A673 (cell line): ENCODE measurements at regions of chr22 and their contacts with region 1.

Region 1: GRCh38 chr22:37608477-37609239 is at the start of gene GGA1:
- DNase-seq: peak; percentile 99
- H3K4me3 ChIP-seq: peak within 1 kb of the TSS; percentile 97
- H3K27ac ChIP-seq: peak within 1 kb of the TSS; percentile 99
- H3K4me1 ChIP-seq: peaks cover 28% of the 10 kb centered on the region
- H3K27me3 ChIP-seq: no peaks in the 10 kb centered on the region
- CTCF ChIP-seq: no peak
- total RNA-seq, gene GGA1: 74.6 and 79.4 TPM in 2 replicates

Region 2: DNA sequence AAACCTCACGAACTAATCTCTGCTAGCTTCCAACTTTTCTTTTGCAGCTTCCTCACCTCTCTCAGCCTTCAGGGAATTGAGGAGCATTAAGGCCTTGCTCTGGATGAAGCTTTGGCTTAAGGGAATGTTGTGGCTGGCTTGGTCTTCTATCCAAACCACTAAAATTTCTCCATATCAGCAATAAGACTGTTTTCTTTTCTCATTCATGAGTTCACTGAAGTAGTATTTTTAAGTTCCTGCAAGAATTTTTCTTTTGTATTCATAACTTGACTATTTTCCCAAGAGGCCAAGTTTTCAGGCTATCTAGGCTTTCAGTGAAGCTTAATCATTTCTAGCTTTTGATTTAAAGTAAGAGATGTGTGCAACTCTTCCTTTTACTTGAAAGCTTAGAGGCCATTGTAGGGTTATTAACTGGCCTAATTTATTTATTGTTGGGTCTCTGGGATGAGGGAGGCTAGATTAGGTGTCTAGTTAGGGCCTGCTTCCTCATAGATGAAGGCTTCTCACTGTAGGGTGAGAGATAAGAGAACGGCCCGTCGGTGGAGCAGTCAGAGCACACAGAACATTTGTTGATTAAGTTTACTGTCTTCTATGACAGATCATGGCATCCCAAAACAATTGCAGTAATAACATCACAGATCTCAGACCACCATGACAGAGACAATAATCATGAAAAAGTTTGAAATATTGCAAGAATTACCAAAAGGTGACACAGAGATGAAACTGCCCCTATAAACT is 662.1 kb before region 1 on chr22:
- CTCF ChIA-PET with region 1: no interaction called
- POLR2A ChIA-PET with region 1: no interaction called
- intact Hi-C with region 1: no loop called
- DNase-seq: no peak
- H3K4me3 ChIP-seq: no peak overlapping the region
- H3K27ac ChIP-seq: no peak overlapping the region
- H3K4me1 ChIP-seq: no peaks in the 10 kb centered on the region
- H3K27me3 ChIP-seq: no peaks in the 10 kb centered on the region
- CTCF ChIP-seq: no peak

Region 3: DNA sequence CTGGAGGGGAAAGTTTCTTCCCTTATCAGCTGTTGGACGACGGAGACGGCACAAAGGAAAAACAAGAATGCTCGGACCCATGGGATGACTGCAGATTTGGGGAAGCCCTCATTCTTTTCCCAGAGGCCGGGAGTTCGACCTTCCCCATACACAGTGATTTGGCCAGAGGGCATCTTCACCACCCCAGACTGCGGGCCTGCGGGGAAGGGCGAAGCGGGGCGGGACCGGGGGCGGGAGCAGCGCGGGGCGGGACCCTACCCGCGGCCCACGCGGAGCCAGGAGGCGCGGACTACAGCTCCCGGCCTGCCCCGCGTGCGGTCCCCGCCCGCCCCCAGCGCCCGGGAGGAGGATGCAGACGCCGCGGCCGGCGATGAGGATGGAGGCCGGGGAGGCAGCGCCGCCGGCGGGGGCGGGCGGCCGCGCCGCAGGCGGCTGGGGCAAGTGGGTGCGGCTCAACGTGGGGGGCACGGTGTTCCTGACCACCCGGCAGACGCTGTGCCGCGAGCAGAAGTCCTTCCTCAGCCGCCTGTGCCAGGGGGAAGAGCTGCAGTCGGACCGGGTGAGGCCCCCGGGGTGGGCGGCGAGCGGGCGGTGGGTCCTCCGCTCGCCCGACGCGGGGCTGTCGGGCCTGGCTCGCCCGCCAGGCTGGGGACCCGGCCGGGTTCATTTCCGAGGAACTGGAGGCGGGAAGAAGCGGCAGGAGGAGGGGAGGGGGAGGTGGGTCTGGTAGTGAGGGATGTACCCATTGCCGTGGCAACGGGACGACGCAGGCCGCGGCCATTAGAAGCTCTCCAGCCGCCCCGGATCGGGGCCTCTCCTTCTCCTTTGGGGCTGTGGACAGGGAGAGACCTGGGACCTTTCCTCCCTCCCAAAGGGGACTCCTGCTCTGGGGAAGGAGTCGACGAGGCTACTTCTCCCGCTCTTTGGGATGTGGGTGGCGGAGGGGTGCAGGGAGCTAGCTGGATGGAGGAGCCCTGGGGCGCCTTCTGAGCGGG is 557.0 kb before region 1 on chr22 and contains the start of gene KCTD17:
- CTCF ChIA-PET with region 1: no interaction called
- POLR2A ChIA-PET with region 1: interaction called, 15 read pairs
- intact Hi-C with region 1: no loop called
- DNase-seq: peak; percentile 84
- H3K4me3 ChIP-seq: peak within 1 kb of the TSS; percentile 92
- H3K27ac ChIP-seq: no peak within 1 kb of the TSS
- H3K4me1 ChIP-seq: peaks cover 4% of the 10 kb centered on the region
- H3K27me3 ChIP-seq: no peaks in the 10 kb centered on the region
- CTCF ChIP-seq: no peak
- total RNA-seq, gene KCTD17: 38.8 and 39.1 TPM in 2 replicates

Region 4: GRCh38 chr22:37186228-37186996 is 422.2 kb before region 1 on chr22:
- CTCF ChIA-PET with region 1: no interaction called
- POLR2A ChIA-PET with region 1: no interaction called
- intact Hi-C with region 1: no loop called
- DNase-seq: peak; percentile 87
- H3K4me3 ChIP-seq: peak overlapping the region; percentile 50
- H3K27ac ChIP-seq: peak overlapping the region; percentile 92
- H3K4me1 ChIP-seq: peaks cover 35% of the 10 kb centered on the region
- H3K27me3 ChIP-seq: no peaks in the 10 kb centered on the region
- CTCF ChIP-seq: no peak

Region 5: DNA sequence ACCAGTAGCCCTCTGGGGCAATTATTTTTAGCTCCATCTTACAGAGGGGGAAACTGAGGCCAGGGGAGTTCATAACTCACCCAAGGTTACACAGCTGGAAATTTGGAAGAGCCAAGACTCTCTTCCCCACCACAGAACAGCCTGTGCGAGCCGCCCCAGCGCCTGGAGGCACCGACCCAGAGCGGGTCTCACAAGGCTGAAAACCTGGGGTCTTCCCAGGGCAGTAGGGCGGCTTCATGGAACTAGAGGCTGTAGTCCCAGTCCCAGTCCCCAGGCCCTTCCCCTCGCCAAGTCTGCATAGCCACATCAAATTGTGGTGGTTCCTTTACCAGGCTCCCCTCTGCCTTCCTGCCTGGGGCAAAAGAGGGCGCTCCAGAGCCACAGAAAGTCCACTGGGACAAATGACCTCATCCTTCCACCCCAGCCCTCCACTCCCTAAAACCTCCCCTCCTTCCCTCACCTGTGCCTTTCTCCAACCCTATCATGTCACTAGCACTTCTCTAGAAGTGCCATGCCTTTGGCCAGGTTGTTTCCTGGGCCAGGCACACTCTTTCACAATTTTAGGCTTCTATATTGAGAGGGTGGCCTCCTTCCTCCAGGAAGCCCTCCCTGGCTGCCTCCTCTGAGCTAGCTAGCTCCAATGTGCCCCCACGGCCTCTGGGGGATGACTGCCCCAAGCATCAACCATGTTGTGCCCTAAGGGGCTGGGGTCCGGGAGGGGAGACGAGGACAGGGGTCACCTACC is 63.5 kb before region 1 on chr22:
- CTCF ChIA-PET with region 1: interaction called, 4 read pairs
- POLR2A ChIA-PET with region 1: no interaction called
- intact Hi-C with region 1: loop called (anchors 5 kb)
- DNase-seq: peak; percentile 51
- H3K4me3 ChIP-seq: no peak overlapping the region
- H3K27ac ChIP-seq: no peak overlapping the region
- H3K4me1 ChIP-seq: peaks cover 18% of the 10 kb centered on the region
- H3K27me3 ChIP-seq: no peaks in the 10 kb centered on the region
- CTCF ChIP-seq: peak; percentile 64

Region 6: GRCh38 chr22:37643225-37643847 is 34.7 kb after region 1 on chr22:
- CTCF ChIA-PET with region 1: interaction called, 10 read pairs
- POLR2A ChIA-PET with region 1: no interaction called
- intact Hi-C with region 1: no loop called
- DNase-seq: peak; percentile 86
- H3K4me3 ChIP-seq: no peak overlapping the region
- H3K27ac ChIP-seq: no peak overlapping the region
- H3K4me1 ChIP-seq: peaks cover 26% of the 10 kb centered on the region
- H3K27me3 ChIP-seq: no peaks in the 10 kb centered on the region
- CTCF ChIP-seq: peak; percentile 93

Region 7: DNA sequence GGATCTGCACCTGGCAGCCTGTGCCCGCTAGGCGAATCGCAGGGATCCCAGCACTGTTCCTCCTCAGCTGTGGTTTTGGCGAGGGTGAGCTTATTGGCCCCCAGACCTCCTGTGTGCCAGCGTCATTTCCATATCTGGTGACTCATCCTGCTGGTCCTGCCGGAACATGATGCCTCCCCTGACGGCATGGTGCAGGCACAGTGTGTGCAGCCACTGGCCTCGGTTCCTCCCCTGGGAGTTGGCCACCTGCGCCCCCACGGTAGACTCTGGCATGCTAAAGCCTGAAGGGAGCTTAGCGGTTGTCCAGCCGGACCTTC is 391.3 kb after region 1 on chr22:
- CTCF ChIA-PET with region 1: no interaction called
- POLR2A ChIA-PET with region 1: interaction called, 15 read pairs
- intact Hi-C with region 1: no loop called
- DNase-seq: peak; percentile 71
- H3K4me3 ChIP-seq: no peak overlapping the region
- H3K27ac ChIP-seq: no peak overlapping the region
- H3K4me1 ChIP-seq: peaks cover 19% of the 10 kb centered on the region
- H3K27me3 ChIP-seq: no peaks in the 10 kb centered on the region
- CTCF ChIP-seq: no peak

Region 8: DNA sequence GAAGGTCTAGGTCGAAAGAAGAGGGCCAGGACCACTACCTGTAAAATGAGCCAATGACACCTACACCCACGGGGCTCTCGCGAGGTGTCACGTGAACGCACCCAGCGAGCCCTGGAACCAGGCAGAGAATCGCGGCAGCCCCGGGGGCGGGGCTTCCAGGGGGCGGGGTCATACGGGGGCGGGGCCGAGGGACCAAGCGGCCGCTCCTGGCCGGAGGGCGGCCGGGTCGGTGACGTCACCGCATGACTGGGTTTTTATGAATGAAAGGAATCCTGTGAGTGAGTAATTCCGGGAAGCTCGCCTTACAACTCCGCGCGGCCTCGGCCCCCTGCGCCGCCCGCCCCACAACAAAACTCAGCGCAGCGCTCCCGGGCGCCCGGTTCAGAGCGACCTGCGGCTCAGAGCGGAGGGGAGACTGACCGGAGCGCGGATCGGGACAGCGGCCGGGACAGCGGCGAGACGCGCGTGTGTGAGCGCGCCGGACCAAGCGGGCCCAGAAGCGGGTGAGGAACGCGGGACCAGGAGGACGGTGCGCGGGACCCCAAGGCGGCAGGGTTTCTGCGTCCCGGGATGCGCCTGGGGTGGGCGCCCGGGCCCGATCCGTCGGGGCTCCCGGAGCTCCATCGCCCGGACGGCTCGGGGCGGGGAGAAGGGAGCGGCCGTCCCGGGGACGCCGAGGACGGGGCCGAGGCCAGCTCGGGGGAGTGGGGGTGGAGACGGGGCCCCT is 593.2 kb after region 1 on chr22 and contains the start of gene MAFF:
- CTCF ChIA-PET with region 1: interaction called, 10 read pairs
- POLR2A ChIA-PET with region 1: no interaction called
- intact Hi-C with region 1: no loop called
- DNase-seq: peak; percentile 92
- H3K4me3 ChIP-seq: peak within 1 kb of the TSS; percentile 87
- H3K27ac ChIP-seq: peak within 1 kb of the TSS; percentile 70
- H3K4me1 ChIP-seq: no peaks in the 10 kb centered on the region
- H3K27me3 ChIP-seq: no peaks in the 10 kb centered on the region
- CTCF ChIP-seq: no peak
- total RNA-seq, gene MAFF: 5.0 and 6.3 TPM in 2 replicates

Region 9: GRCh38 chr22:38623351-38623750 is 1014.7 kb after region 1 on chr22:
- CTCF ChIA-PET with region 1: interaction called, 10 read pairs
- POLR2A ChIA-PET with region 1: no interaction called
- intact Hi-C with region 1: no loop called
- DNase-seq: no peak
- H3K4me3 ChIP-seq: no peak overlapping the region
- H3K27ac ChIP-seq: no peak overlapping the region
- H3K4me1 ChIP-seq: no peaks in the 10 kb centered on the region
- H3K27me3 ChIP-seq: no peaks in the 10 kb centered on the region
- CTCF ChIP-seq: no peak

Region 10: DNA sequence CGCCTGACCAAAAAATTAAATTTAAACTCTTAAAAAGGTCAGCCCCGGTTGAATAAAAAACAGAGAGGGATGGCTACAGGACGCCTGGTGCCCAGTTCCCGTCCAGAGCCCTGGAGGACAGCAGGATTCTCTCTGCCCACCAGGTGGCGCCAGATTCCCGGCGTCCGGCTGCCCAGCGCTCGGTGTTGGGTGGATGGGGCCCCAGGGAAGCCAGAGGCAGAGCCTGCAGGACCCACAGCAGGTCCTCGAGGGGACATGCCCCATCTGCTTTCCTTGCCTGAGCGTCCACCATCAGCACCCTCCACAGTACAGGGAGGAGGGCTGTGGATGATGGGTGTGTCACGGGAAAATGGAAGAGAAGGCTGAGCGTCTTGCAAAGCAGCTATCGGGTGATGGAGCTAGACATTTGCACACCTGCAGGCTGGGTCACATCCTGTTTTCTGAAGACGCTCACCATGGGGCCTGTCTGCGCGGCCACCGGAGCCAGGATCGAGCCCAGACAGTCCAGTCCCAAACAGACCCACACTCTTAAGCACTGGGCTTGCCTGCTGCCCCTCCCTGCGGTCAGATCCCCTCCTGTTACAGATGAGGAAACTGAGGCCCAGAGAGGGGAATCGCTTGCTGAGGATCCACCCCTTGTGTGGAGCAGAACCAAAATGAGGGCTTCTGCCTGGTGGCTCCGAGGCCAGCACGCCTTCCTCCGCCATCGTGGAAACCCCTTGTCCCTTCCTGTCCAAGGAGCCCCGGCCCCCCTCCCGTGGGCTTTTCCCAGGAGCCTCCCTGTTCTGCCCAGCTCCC is 1562.4 kb after region 1 on chr22:
- CTCF ChIA-PET with region 1: no interaction called
- POLR2A ChIA-PET with region 1: no interaction called
- intact Hi-C with region 1: no loop called
- DNase-seq: peak; percentile 84
- H3K4me3 ChIP-seq: no peak overlapping the region
- H3K27ac ChIP-seq: no peak overlapping the region
- H3K4me1 ChIP-seq: peaks cover 20% of the 10 kb centered on the region
- H3K27me3 ChIP-seq: no peaks in the 10 kb centered on the region
- CTCF ChIP-seq: peak; percentile 94